ENCODE measurements at regions of chr6 and their contacts with region 1.

Region 1: GRCh38 chr6:140052756-140053729 is 678.6 kb upstream of the CITED2 start:
- DNase-seq: no peak
- H3K4me3 ChIP-seq: no peak overlapping the region
- CTCF ChIP-seq: peak; percentile 29

Region 2: GRCh38 chr6:139375232-139376016 is 677.6 kb before region 1 on chr6:
- in situ Hi-C with region 1: loop called (anchors 10 kb)
- DNase-seq: peak; percentile 97
- H3K4me3 ChIP-seq: peak overlapping the region; percentile 85
- CTCF ChIP-seq: peak; percentile 14

Region 3: DNA sequence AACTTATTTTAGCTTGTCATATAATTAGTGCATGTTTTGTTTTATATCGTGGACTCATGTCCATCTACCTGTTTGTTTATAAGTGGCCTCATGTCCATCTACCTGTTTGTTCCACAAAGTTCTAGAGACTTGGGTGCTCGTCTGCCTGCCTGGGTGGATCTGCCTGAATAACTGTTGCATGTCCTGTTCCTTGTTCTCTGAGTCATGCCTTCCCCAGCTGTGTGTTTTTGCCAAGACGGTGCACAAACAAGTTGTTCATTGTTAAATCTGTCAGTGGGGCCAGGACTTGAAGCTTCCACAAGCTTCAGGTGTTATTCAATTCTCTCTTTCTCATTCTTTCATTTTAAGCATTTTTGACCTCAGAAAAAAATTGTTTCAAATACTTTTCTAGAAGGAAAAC is 320.6 kb before region 1 on chr6:
- in situ Hi-C with region 1: no loop called
- DNase-seq: peak; percentile 33
- H3K4me3 ChIP-seq: no peak overlapping the region
- CTCF ChIP-seq: no peak

Region 4: DNA sequence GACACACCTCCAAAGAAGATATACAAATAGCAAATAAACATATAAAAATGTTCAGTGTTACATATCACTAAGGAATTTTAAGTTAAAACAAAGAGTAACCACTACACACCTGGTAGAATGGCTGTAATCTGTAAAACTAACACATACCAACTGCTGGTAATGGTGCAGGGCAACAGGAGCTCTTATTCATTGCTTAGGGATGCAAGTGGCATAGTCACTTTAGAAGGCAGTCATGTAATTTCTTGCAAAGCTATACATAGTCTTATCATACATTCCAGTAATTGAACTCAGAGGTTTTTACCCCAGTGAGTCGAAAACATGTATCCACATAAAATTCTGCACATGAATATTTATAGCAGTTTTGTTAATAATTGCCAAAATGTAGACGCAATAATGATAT is 228.2 kb after region 1 on chr6:
- in situ Hi-C with region 1: no loop called
- DNase-seq: no peak
- H3K4me3 ChIP-seq: no peak overlapping the region
- CTCF ChIP-seq: no peak

Measured in astrocyte of the cerebellum (primary cell).